Ovary (tissue), 10 donors: ENCODE measurements at regions of chr20 and their contacts with region 1.

Region 1: GRCh38 chr20:35664544-35665221 is at the starts of genes CPNE1 and RBM12:
- DNase-seq: peak; percentile 92 to 95 (median 94)
- H3K4me3 ChIP-seq: peak within 1 kb of the TSS; percentile 86
- H3K27ac ChIP-seq: peak within 1 kb of the TSS; percentile 94
- H3K4me1 ChIP-seq: peaks cover 6% of the 10 kb centered on the region
- H3K27me3 ChIP-seq: no peaks in the 10 kb centered on the region
- CTCF ChIP-seq: peak in 2 of 3 donors; percentile 5 to 16
- EP300 ChIP-seq: peak; percentile 26
- POLR2A ChIP-seq: peak; percentile 99
- total RNA-seq, gene CPNE1: 97.5 to 173 (median 165) TPM
- total RNA-seq, gene RBM12: 30.0 to 130 (median 107) TPM

Region 2: DNA sequence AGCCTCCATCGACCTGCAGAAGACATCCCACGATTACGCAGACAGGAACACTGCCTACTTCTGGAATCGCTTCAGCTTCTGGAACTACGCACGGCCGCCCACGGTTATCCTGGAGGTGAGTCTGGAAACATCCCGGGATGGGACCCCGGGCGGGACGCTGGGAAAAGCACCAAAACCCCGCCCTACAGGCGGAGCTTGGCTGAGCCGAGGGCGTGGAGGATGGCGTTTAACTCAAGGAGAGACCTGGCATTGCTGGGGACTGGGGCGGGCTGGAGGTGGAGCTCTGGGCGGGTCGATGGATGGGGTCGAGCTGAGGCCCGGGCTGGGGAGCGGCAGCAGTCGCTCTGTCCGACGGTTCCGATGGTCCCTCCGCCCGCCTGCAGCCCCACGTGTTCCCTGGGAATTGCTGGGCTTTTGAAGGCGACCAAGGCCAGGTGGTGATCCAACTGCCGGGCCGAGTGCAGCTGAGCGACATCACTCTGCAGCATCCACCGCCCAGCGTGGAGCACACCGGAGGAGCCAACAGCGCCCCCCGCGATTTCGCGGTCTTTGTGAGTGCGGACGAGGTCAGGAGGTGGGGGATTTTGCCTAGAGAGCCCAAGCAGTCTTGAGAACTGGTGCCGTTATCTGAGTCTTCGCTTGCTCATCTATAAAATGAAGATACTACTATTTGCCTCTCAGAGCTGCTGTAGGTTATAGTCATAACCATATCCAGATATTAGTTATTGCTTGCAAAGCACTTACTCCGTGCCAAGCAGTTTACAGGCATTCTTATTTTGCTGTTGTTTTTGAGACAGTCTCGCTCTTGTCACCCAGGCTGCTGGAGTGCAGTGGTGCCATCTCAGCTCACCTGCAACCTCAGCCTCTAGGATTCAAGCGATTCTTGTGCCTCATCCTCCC is 45.2 kb before region 1 on chr20:
- intact Hi-C with region 1: loop called in 2 of 4 experiments (anchors 2 to 5 kb)
- DNase-seq: peak; percentile 76 to 87 (median 82)
- H3K4me3 ChIP-seq: peak overlapping the region; percentile 46
- H3K27ac ChIP-seq: peak overlapping the region; percentile 73 to 82
- H3K4me1 ChIP-seq: peaks cover 1% of the 10 kb centered on the region
- H3K27me3 ChIP-seq: no peaks in the 10 kb centered on the region
- CTCF ChIP-seq: no peak
- EP300 ChIP-seq: no peak
- POLR2A ChIP-seq: no peak